Transverse colon (tissue), 4 donors: ENCODE measurements at regions of chrX and their contacts with region 1.

Region 1: GRCh38 chrX:11319806-11320520 is 26.8 kb downstream of the AMELX start:
- DNase-seq: no peak
- H3K4me3 ChIP-seq: no peak overlapping the region
- H3K27ac ChIP-seq: peak overlapping the region in 2 of 4 donors; percentile 28 to 35
- H3K4me1 ChIP-seq: no peaks in the 10 kb centered on the region
- H3K27me3 ChIP-seq: no peaks in the 10 kb centered on the region
- CTCF ChIP-seq: no peak
- EP300 ChIP-seq: no peak
- POLR2A ChIP-seq: no peak

Region 2: DNA sequence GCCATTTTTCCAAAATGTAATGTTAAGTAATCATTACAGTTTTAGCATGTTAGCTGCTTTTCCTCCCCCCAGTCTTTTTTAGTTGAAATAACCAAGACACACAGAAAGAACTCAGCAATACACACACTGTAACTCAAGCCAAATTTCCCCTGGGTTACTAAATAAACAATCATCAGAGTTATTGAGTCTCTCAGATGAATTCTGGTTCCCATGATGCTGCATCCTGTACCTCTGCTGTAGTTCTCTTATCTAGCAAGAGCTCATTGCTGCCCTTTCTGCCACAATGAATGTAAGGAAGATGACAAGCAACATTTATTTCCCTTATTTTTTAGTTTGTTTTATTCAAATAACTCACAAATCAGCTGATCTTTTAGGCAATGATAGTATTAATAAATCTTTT is 160.7 kb after region 1 on chrX:
- in situ Hi-C with region 1: no loop called
- intact Hi-C with region 1: no loop called
- DNase-seq: no peak
- H3K4me3 ChIP-seq: no peak overlapping the region
- H3K27ac ChIP-seq: no peak overlapping the region
- H3K4me1 ChIP-seq: no peaks in the 10 kb centered on the region
- H3K27me3 ChIP-seq: no peaks in the 10 kb centered on the region
- CTCF ChIP-seq: no peak
- EP300 ChIP-seq: no peak
- POLR2A ChIP-seq: no peak

Region 3: GRCh38 chrX:12758292-12758691 is 1438.3 kb after region 1 on chrX:
- in situ Hi-C with region 1: no loop called
- intact Hi-C with region 1: loop called (anchors 5 kb)
- DNase-seq: no peak
- H3K4me3 ChIP-seq: no peak overlapping the region
- H3K27ac ChIP-seq: no peak overlapping the region
- H3K4me1 ChIP-seq: no peaks in the 10 kb centered on the region
- H3K27me3 ChIP-seq: no peaks in the 10 kb centered on the region
- CTCF ChIP-seq: no peak
- EP300 ChIP-seq: no peak
- POLR2A ChIP-seq: no peak